Activated B cell treated with CpG ODN at 0.5 μM for 24 hours (primary cell): ENCODE measurements at regions of chr4 and their contacts with region 1.

Region 1: GRCh38 chr4:139295206-139295941 is 5.9 kb upstream of the NAA15 start:
- DNase-seq: peak; percentile 98
- ATAC-seq: peak; percentile 93
- H3K4me3 Mint-ChIP-seq: peak overlapping the region; percentile 97
- H3K27ac Mint-ChIP-seq: peak overlapping the region; percentile 98
- H3K4me1 Mint-ChIP-seq: peaks cover 15% of the 10 kb centered on the region
- H3K27me3 Mint-ChIP-seq: no peaks in the 10 kb centered on the region
- CTCF ChIP-seq: peak; percentile 90

Region 2: GRCh38 chr4:139083956-139084803 is 211.2 kb before region 1 on chr4:
- CTCF ChIA-PET with region 1: interaction called, 11 read pairs
- POLR2A ChIA-PET with region 1: interaction called, 36 read pairs
- intact Hi-C with region 1: loop called (anchors 1 kb)
- DNase-seq: peak; percentile 79
- ATAC-seq: peak; percentile 66
- H3K4me3 Mint-ChIP-seq: peak overlapping the region; percentile 99
- H3K27ac Mint-ChIP-seq: peak overlapping the region; percentile 99
- H3K4me1 Mint-ChIP-seq: peaks cover 38% of the 10 kb centered on the region
- H3K27me3 Mint-ChIP-seq: no peaks in the 10 kb centered on the region
- CTCF ChIP-seq: no peak

Region 3: DNA sequence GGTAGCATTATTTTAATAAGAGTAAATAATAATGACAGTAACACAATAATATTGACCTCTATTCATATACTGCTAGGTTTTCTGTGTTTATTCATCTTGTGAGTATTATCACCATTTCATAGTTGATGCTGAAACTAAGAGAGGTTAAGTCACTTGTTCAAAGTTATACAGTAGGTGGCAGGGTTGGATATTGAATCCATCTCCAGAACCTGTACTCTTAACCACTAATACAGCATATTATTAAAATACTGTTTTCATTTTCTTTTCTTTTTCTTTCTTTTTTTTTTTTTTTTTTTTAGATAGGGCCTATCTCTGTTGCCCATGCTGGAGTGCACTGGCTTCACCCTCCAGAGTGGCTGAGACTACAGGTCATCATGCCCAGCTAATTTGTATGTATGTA is 111.2 kb before region 1 on chr4:
- CTCF ChIA-PET with region 1: interaction called, 3 read pairs
- POLR2A ChIA-PET with region 1: interaction called, 74 read pairs
- intact Hi-C with region 1: no loop called
- DNase-seq: no peak
- ATAC-seq: no peak
- H3K4me3 Mint-ChIP-seq: no peak overlapping the region
- H3K27ac Mint-ChIP-seq: no peak overlapping the region
- H3K4me1 Mint-ChIP-seq: no peaks in the 10 kb centered on the region
- H3K27me3 Mint-ChIP-seq: no peaks in the 10 kb centered on the region
- CTCF ChIP-seq: no peak

Region 4: GRCh38 chr4:139266583-139267257 is 28.7 kb before region 1 on chr4:
- CTCF ChIA-PET with region 1: interaction called, 11 read pairs
- POLR2A ChIA-PET with region 1: interaction called, 9 read pairs
- intact Hi-C with region 1: loop called (anchors 1 kb)
- DNase-seq: peak; percentile 43
- ATAC-seq: peak; percentile 96
- H3K4me3 Mint-ChIP-seq: peak overlapping the region; percentile 72
- H3K27ac Mint-ChIP-seq: peak overlapping the region; percentile 72
- H3K4me1 Mint-ChIP-seq: peaks cover 13% of the 10 kb centered on the region
- H3K27me3 Mint-ChIP-seq: peaks cover 2% of the 10 kb centered on the region
- CTCF ChIP-seq: no peak

Region 5: DNA sequence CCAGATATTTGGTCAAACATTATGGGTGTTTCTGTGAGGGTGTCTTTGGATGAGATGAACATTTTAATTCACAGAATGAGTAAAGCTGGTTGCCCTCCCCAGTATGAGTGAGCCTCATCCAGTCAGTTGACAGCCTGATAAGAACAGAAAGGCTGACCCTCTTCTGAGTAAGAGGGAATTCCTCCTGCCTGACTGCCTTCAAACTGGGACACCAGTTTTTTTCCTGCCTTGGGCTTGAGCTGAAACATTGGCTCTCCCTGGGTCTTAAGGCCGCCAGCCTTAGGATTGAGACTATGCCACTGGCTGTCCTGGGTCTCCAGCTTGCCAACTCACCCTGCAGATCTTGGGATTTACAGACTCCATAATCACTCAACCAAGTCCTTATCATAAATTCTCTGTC is 873.1 kb after region 1 on chr4:
- CTCF ChIA-PET with region 1: no interaction called
- POLR2A ChIA-PET with region 1: no interaction called
- intact Hi-C with region 1: no loop called
- DNase-seq: no peak
- ATAC-seq: no peak
- H3K4me3 Mint-ChIP-seq: no peak overlapping the region
- H3K27ac Mint-ChIP-seq: no peak overlapping the region
- H3K4me1 Mint-ChIP-seq: peaks cover 3% of the 10 kb centered on the region
- H3K27me3 Mint-ChIP-seq: peaks cover 19% of the 10 kb centered on the region
- CTCF ChIP-seq: no peak

Region 6: DNA sequence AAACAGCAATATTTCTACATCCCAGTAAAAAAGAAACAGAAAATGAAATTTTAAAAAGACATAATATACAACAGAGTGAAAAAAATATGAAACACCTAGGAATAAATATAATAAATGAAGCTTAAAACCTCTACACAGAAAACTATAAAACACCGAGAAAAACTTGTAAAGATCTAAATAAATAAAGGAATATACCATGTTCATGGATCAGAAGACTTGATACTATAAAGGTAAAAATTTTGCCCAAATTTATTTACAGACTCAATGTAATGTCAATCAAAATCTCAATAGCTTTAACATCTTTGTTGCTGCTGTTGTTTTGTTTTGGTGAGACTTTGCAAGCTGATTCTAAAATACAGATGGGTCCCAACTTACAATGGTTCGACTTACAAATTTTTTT is 1455.1 kb after region 1 on chr4:
- CTCF ChIA-PET with region 1: interaction called, 3 read pairs
- POLR2A ChIA-PET with region 1: interaction called, 13 read pairs
- intact Hi-C with region 1: no loop called
- DNase-seq: no peak
- ATAC-seq: no peak
- H3K4me3 Mint-ChIP-seq: peak overlapping the region; percentile 57
- H3K27ac Mint-ChIP-seq: peak overlapping the region; percentile 56
- H3K4me1 Mint-ChIP-seq: peaks cover 75% of the 10 kb centered on the region
- H3K27me3 Mint-ChIP-seq: no peaks in the 10 kb centered on the region
- CTCF ChIP-seq: no peak